AG04449 (cell line): ENCODE measurements at regions of chr9 and their contacts with region 1.

Region 1: GRCh38 chr9:17216011-17216410 is 81.2 kb downstream of the CNTLN start:
- DNase-seq: no peak
- H3K4me3 ChIP-seq: no peak overlapping the region
- CTCF ChIP-seq: no peak

Region 2: GRCh38 chr9:17462869-17463464 is 247.0 kb after region 1 on chr9:
- CTCF ChIA-PET with region 1: interaction called, 12 read pairs
- POLR2A ChIA-PET with region 1: no interaction called
- DNase-seq: peak; percentile 16
- H3K4me3 ChIP-seq: no peak overlapping the region
- CTCF ChIP-seq: peak; percentile 45